A549 (cell line): ENCODE measurements at regions of chr3 and their contacts with region 1.

Region 1: DNA sequence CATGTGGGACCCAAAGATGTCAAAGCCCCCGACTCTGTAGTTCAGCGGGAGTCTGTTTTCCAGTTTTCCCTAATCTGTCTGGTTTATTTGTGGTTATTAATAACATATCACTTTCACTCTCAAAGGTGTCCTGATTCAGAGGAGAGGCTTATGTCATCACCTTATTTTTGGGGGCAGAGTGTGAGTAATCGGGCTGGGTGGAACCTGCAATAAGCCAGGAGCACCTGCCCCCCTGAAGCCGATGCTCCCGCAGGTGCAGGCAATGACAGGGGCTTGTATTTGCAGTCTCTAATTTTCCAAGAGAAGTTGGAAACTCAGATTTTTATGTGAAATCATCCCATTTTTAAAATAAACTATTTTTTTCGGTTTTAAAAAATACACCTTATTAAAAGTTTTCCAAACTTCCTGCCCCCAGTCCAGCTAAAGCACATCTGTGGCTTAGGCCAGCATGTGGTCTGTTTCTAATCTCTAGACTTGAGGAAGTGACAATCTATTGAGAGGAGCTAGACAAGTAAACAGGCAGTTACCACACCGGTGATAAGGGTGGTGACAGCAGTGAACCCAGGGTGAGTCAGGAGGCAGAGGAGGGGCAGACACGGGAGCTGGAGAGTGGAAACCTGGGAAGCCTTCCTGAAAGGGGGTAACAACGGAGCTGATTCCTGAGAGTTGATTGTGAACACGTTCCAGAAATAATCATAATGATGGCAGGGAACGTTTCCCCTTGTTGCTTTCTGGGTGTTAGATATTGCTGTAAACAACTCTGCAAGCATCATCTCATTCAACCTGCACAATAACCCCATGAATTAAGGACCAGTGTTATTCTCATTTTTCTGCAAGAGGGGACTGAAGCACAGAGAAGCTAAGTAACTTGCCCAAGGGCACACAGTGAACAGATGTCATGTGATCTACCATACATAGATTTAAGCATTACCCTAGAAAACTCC is 37.3 kb downstream of the BHLHE40 start:
- DNase-seq: peak; percentile 90 to 95
- ATAC-seq: peak; percentile 74 to 81
- H3K4me3 ChIP-seq: no peak overlapping the region
- H3K27ac ChIP-seq: peak overlapping the region; percentile 94 to 98
- H3K4me1 ChIP-seq: peaks cover 98% of the 10 kb centered on the region
- CTCF ChIP-seq: no peak
- EP300 ChIP-seq: peak; percentile 83 to 85; a peak in 4 of 5 replicates
- POLR2A ChIP-seq: no peak
- RAD21 ChIP-seq: peak in 1 of 2 experiments; percentile 17; a peak in 1 of 5 replicates

Region 2: DNA sequence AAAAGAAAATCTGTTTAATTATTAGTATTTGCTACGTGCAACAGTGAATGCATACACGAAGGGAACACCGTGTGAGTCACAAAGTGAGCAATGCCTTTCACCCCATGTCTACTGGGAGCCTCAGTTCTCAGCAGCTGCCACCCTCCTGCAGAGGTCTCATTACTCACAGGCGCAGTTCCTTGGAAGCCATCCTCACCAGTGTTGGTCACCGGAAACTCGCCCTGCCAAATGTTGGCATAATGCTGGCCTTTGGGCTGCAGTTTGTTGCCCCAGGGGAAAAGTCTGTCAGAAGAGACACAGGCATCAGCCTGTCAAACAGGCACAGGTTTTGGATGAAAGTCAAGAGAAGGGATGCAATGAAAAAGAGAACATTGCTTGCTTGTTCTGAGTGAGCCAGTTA is 599.5 kb before region 1 on chr3:
- CTCF ChIA-PET with region 1: no interaction called
- POLR2A ChIA-PET with region 1: no interaction called
- DNase-seq: peak; percentile 49 to 63
- ATAC-seq: peak; percentile 96 to 97
- H3K4me3 ChIP-seq: no peak overlapping the region
- H3K27ac ChIP-seq: peak overlapping the region in 1 of 2 experiments; percentile 65; a peak in 2 of 6 replicates
- H3K4me1 ChIP-seq: peaks cover 21% of the 10 kb centered on the region
- CTCF ChIP-seq: no peak
- EP300 ChIP-seq: no peak
- POLR2A ChIP-seq: no peak
- RAD21 ChIP-seq: no peak

Region 3: DNA sequence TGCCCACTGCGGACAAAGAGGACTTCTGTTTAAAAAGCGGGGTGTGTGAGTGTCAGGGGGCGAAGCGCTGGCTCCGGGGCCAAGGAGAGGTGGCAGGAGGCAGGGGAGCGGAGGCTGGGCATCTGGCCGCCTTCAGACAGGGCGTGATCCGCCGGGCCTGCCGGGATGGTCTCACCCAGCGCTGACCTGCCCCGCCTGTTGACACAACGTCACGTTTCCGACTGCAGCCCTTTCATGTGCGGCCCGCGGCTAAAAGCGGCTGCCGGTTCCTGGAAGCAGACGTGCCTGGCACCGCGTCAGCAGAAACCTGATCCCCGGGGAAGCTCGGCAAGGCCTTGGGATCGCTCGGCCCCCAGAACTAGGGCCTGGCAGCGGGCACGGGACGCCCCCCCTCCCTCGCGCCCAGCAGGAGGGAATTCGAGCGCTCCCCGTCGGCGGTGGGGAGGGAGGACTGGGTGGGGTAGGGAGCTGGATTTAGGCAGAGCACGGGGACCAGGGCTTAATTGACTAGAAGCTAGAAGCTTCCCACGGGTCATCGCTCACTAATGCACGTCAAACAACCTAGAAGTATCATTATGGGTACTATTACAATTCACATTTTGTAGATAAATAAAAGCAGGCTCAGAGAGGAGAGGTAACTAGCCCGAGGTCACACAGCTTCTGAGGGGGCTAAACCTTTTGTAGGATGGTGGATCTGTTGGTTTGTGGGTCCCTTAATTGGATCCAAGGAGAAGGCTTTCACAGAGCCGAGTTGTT is 29.5 kb before region 1 on chr3:
- CTCF ChIA-PET with region 1: interaction called, 445 read pairs
- POLR2A ChIA-PET with region 1: interaction called, 367 read pairs
- DNase-seq: peak; percentile 91 to 100
- ATAC-seq: peak; percentile 73 to 83
- H3K4me3 ChIP-seq: 0 out of 3 replicates have a peak overlapping the region, but pooled peaks have one; percentile 16
- H3K27ac ChIP-seq: peak overlapping the region; percentile 96 to 98
- H3K4me1 ChIP-seq: peaks cover 60% of the 10 kb centered on the region
- CTCF ChIP-seq: no peak; the same call in 2 of the 3 replicates
- EP300 ChIP-seq: peak; percentile 99 to 100
- POLR2A ChIP-seq: peak; percentile 18; the same call in 1 of the 2 replicates
- RAD21 ChIP-seq: peak; percentile 37 to 76